K562 (cell line): ENCODE measurements at regions of chr5 and their contacts with region 1.

Region 1: GRCh38 chr5:81779125-81779915 is 28.4 kb upstream of the SSBP2 start:
- DNase-seq: peak in 1 of 4 experiments; percentile 46
- ATAC-seq: peak; percentile 57
- H3K4me3 ChIP-seq: peak overlapping the region; percentile 17; the same call in 1 of the 2 replicates
- H3K27ac ChIP-seq: peak overlapping the region; percentile 74
- H3K4me1 ChIP-seq: peaks cover 3 to 26% of the 10 kb centered on the region in 2 experiments; a peak in 4 of 5 replicates
- H3K27me3 ChIP-seq: no peaks in the 10 kb centered on the region
- CTCF ChIP-seq: no peak
- EP300 ChIP-seq: no peak
- POLR2A ChIP-seq: no peak
- RAD21 ChIP-seq: no peak

Region 2: GRCh38 chr5:81759632-81760005 is 19.7 kb before region 1 on chr5:
- CTCF ChIA-PET with region 1: no interaction called
- POLR2A ChIA-PET with region 1: interaction called, 35 read pairs
- in situ Hi-C with region 1: no loop called
- intact Hi-C with region 1: loop called (anchors 1 kb)
- DNase-seq: peak in 1 of 4 experiments; percentile 47
- ATAC-seq: peak; percentile 18
- H3K4me3 ChIP-seq: peak overlapping the region; percentile 39
- H3K27ac ChIP-seq: peak overlapping the region; percentile 81
- H3K4me1 ChIP-seq: peaks cover 3 to 76% of the 10 kb centered on the region in 2 experiments
- H3K27me3 ChIP-seq: no peaks in the 10 kb centered on the region
- CTCF ChIP-seq: no peak
- EP300 ChIP-seq: no peak
- POLR2A ChIP-seq: no peak
- RAD21 ChIP-seq: no peak

Region 3: GRCh38 chr5:81768667-81769452 is 10.5 kb before region 1 on chr5:
- CTCF ChIA-PET with region 1: no interaction called
- POLR2A ChIA-PET with region 1: interaction called, 35 read pairs
- in situ Hi-C with region 1: no loop called
- intact Hi-C with region 1: no loop called
- DNase-seq: no peak
- ATAC-seq: no peak
- H3K4me3 ChIP-seq: no peak overlapping the region
- H3K27ac ChIP-seq: no peak overlapping the region
- H3K4me1 ChIP-seq: peaks cover 0 to 3% of the 10 kb centered on the region in 2 experiments; a peak in 3 of 5 replicates
- H3K27me3 ChIP-seq: no peaks in the 10 kb centered on the region
- CTCF ChIP-seq: no peak
- EP300 ChIP-seq: no peak
- POLR2A ChIP-seq: no peak
- RAD21 ChIP-seq: no peak